ENCODE measurements at regions of chr4 and their contacts with region 1.

Region 1: DNA sequence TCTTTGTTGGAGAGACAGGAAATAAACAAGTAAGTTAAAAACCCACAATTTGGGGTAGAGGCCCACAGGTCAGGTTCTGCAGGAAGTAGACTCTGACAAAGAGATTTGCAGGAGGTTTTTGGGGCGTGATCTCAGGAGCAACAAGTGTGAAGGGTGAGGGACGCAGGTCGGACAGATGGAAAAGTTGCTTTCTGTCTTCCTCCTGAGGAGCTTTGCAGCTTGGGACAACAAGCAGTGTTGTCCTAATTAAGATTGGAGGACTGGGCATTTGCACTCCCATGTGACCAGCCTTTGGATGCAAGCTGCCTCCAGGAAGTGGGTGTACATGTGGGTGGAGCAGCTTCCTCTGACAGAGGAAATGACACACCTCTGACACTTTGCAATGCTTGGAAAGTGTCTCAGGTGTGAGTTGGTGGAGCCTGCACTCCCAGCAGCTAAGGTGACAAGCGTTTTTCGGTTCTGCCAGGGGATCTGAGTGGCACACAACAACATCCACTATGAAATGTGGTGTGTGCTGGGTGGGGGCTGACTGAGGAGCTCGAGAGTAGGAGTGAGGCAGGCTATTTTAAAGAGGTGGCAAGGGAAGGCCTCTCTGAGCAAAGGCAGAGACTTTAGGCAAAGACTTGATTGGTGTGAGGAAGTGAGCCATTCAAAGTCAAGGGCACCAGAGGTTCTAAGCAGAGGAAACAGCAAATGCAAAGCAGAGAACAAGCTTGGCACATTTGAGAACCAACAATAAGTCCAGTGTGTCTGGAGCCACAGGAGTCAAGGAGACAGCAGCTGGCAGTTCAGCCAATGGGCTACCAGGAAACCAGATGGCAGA is 339.8 kb upstream of the GATB start:
- DNase-seq: peak; percentile 91 to 95 (median 94)
- H3K4me3 ChIP-seq: peak overlapping the region; percentile 33 to 70
- H3K4me3 Mint-ChIP-seq: peak overlapping the region; percentile 76 to 92 (median 90)
- H3K27ac ChIP-seq: peak overlapping the region; percentile 78
- H3K27ac Mint-ChIP-seq: peak overlapping the region; percentile 96 to 99 (median 98)
- H3K4me1 ChIP-seq: peaks cover 95% of the 10 kb centered on the region
- H3K4me1 Mint-ChIP-seq: peaks cover 66 to 97% (median 86%) of the 10 kb centered on the region in 4 donors
- H3K27me3 ChIP-seq: no peaks in the 10 kb centered on the region
- H3K27me3 Mint-ChIP-seq: no peaks in the 10 kb centered on the region

Region 2: DNA sequence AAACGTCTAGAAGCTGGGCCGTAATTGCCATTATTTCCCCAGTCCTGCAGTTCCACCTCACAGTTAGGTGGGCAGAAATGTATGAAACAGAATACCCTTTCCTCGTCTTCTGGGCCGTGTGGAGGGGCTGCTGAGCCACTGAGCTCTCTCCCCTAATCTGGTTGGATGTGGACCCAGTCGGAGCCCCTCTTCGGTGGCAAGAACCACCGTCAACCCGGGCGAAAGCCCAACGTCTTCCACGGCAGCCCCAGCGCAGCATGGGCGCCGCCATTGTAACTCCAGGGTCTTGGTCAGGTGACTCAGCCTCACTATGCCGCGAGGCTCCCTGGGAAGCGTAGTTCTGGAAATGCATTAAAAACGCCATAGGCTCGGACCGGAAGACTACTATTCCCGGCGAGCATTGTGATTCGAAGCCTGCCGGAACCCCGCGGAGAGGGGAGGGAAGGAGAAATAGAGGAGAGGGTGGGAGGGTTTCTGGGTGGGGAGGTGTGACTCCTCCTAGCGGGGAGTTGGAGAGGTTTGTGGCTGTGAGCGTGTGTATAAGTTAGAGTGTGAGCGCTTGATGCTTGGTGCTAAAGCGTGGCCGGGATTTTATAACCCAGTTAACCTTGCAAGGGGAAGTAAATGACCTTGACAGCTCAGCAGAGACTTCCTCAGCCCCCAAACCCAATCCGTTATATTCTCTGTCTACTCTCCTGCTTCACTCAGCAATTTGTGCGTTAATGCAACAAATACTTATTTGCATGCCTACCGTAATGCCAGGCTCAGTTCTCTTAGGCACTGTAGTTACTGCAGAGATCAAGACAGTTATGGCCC is 339.7 kb before region 1 on chr4 and contains the start of gene GATB:
- CTCF ChIA-PET with region 1: interaction called, 3 read pairs
- POLR2A ChIA-PET with region 1: interaction called, 7 read pairs
- intact Hi-C with region 1: loop called (anchors 5 kb)
- DNase-seq: peak; percentile 91 to 97 (median 93)
- H3K4me3 ChIP-seq: peak within 1 kb of the TSS; percentile 77 to 84
- H3K4me3 Mint-ChIP-seq: peak within 1 kb of the TSS; percentile 96 to 100 (median 98)
- H3K27ac ChIP-seq: peak within 1 kb of the TSS; percentile 60
- H3K27ac Mint-ChIP-seq: peak within 1 kb of the TSS; percentile 87 to 98 (median 97)
- H3K4me1 ChIP-seq: peaks cover 13% of the 10 kb centered on the region
- H3K4me1 Mint-ChIP-seq: peaks cover 13 to 19% (median 17%) of the 10 kb centered on the region in 4 donors
- H3K27me3 ChIP-seq: no peaks in the 10 kb centered on the region
- H3K27me3 Mint-ChIP-seq: peaks cover under 1 to 1% of the 10 kb centered on the region in 2 donors
- total RNA-seq, gene GATB: 10.8 to 12.5 TPM

Region 3: DNA sequence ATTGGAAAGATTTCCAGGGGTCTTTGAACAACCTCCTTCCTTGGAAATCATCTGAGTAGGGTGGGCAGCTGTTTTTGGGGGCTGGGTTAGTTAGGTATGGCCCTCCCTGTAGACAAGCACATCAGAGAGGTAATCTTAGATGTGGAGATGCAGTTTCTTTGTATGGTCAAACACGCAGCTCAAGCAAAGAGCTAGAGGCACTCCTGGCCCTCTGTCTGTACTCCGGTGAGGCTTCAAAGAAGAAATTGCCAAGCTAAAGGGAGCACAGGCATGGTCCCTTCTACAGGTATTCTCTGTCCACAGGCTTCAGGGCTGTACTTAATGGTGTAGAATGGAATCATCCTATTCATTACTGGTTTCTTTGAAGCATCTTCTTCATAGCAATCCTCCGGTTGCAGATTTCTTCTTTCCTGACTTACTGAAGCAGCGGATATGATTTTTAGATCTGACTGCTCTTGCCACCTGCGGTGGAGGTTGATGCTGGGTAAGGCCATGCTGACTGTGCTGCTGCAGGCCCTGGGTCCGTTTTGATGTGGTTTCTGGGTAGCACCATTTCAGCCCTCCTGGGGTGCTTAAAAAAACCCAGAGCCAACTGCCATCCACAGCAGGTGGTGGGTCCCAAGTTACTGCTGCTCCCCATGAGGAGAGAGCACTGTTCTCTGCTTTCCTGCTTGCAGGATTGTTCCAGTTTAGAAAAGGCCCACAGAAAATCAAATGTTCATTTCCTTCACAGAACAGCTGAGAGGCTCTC is 20.9 kb before region 1 on chr4:
- CTCF ChIA-PET with region 1: interaction called, 10 read pairs
- POLR2A ChIA-PET with region 1: interaction called, 97 read pairs
- intact Hi-C with region 1: loop called (anchors 1 kb)
- DNase-seq: peak; percentile 52 to 63 (median 57)
- H3K4me3 ChIP-seq: peak overlapping the region in 1 of 2 donors; percentile 17
- H3K4me3 Mint-ChIP-seq: peak overlapping the region in 7 of 8 donors; percentile 50 to 81 (median 66)
- H3K27ac ChIP-seq: peak overlapping the region; percentile 45
- H3K27ac Mint-ChIP-seq: peak overlapping the region; percentile 85 to 97 (median 90)
- H3K4me1 ChIP-seq: peaks cover 50% of the 10 kb centered on the region
- H3K4me1 Mint-ChIP-seq: peaks cover 43 to 85% (median 67%) of the 10 kb centered on the region in 4 donors
- H3K27me3 ChIP-seq: no peaks in the 10 kb centered on the region
- H3K27me3 Mint-ChIP-seq: no peaks in the 10 kb centered on the region

Region 4: GRCh38 chr4:152128356-152128755 is 27.8 kb after region 1 on chr4:
- CTCF ChIA-PET with region 1: interaction called, 3 read pairs
- POLR2A ChIA-PET with region 1: interaction called, 14 read pairs
- intact Hi-C with region 1: no loop called
- DNase-seq: no peak
- H3K4me3 ChIP-seq: no peak overlapping the region
- H3K4me3 Mint-ChIP-seq: peak overlapping the region in 1 of 8 donors; percentile 10
- H3K27ac ChIP-seq: no peak overlapping the region
- H3K27ac Mint-ChIP-seq: peak overlapping the region in 2 of 7 donors; percentile 60 to 71
- H3K4me1 ChIP-seq: peaks cover 9% of the 10 kb centered on the region
- H3K4me1 Mint-ChIP-seq: peaks cover 16 to 54% (median 39%) of the 10 kb centered on the region in 4 donors
- H3K27me3 ChIP-seq: no peaks in the 10 kb centered on the region
- H3K27me3 Mint-ChIP-seq: no peaks in the 10 kb centered on the region

Region 5: DNA sequence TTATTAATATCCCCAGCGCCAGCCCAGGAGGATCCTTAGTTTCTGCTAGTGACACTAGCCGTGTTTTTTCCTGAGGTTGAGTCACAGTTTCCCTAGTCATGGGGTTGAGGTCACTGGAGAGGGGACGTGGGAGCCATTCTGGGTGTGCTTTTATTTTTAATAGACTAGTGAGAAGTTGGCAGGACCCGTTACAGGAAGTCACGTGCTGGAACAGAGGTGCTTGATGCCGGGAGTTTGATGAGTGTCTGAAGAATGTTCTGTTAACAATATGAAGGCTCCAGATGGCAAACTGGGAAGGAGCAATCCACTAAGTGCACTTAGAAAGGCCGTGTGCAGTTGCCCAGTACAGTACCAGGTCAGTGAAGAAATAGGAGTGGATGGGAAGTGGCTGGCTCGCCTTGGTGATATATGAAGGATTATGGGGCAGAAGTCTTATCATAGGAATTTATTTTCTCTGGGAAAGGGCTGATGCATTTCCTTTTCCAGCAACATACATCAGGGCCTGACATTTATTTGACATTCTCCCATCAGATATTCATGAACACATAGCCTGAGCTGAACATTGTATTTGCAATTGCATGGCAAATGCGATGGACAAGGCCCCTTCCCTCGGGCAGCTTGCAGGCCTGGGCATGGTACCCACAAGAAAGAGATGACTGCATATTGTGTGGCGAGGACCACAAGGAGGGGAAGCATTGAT is 143.5 kb after region 1 on chr4:
- CTCF ChIA-PET with region 1: interaction called, 4 read pairs
- POLR2A ChIA-PET with region 1: interaction called, 19 read pairs
- intact Hi-C with region 1: no loop called
- DNase-seq: peak in 1 of 5 donors; percentile 6
- H3K4me3 ChIP-seq: no peak overlapping the region
- H3K4me3 Mint-ChIP-seq: peak overlapping the region in 6 of 8 donors; percentile 1 to 77 (median 24)
- H3K27ac ChIP-seq: no peak overlapping the region
- H3K27ac Mint-ChIP-seq: peak overlapping the region in 4 of 7 donors; percentile 4 to 50 (median 16)
- H3K4me1 ChIP-seq: peaks cover 40% of the 10 kb centered on the region
- H3K4me1 Mint-ChIP-seq: peaks cover 26 to 49% (median 37%) of the 10 kb centered on the region in 4 donors
- H3K27me3 ChIP-seq: no peaks in the 10 kb centered on the region
- H3K27me3 Mint-ChIP-seq: no peaks in the 10 kb centered on the region

Region 6: DNA sequence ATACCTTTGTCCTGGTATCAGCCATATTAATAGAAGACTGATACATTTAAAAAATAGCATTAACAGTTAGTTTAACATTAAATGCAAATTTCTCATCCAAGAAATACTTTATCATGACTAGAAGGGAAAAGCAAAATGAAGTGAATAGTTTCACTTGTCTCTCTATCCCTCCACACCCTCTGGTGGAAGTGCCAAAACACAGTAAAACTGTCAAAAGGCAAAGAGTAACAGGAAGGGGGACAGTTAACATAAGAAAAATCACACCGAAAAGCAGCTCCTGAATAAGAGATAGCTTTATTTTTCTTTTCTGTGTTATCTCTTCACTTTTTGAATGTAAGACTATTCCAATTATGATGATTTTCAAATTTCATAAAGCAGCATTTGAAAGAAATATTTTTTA is 248.1 kb after region 1 on chr4:
- CTCF ChIA-PET with region 1: interaction called, 7 read pairs
- POLR2A ChIA-PET with region 1: interaction called, 4 read pairs
- intact Hi-C with region 1: loop called (anchors 1 kb)
- DNase-seq: peak; percentile 17 to 37 (median 19)
- H3K4me3 ChIP-seq: no peak overlapping the region
- H3K4me3 Mint-ChIP-seq: no peak overlapping the region
- H3K27ac ChIP-seq: no peak overlapping the region
- H3K27ac Mint-ChIP-seq: no peak overlapping the region
- H3K4me1 ChIP-seq: no peaks in the 10 kb centered on the region
- H3K4me1 Mint-ChIP-seq: peaks cover 4 to 26% (median 7%) of the 10 kb centered on the region in 4 donors
- H3K27me3 ChIP-seq: no peaks in the 10 kb centered on the region
- H3K27me3 Mint-ChIP-seq: no peaks in the 10 kb centered on the region

Region 7: DNA sequence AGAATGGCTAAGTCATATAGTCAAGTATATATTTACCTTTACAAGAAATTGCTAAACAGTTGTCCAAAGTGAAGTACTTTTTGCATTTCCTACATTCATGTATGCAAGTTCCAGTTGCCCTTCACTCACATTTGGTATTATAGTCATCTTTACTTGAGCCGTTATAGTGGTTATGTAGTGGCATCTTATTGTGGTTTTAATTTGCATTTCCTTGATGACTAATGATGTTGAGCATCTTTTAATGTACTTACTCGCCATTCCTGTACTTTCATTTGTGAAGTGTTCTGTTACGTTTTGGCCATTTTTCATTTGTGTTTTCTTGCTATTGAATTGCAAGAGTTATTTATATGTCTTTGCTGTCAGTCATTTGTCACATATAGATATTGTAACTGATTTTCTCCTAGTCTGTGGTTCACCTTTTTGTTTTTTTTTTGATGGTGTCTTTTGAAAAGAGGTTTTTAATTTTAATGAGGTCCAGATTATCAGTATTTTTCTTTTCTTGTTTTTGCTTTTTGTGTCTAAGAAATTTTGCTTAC is 706.8 kb after region 1 on chr4:
- CTCF ChIA-PET with region 1: no interaction called
- POLR2A ChIA-PET with region 1: no interaction called
- intact Hi-C with region 1: no loop called
- DNase-seq: peak in 1 of 5 donors; percentile 9
- H3K4me3 ChIP-seq: no peak overlapping the region
- H3K4me3 Mint-ChIP-seq: peak overlapping the region in 7 of 8 donors; percentile 1 to 75 (median 38)
- H3K27ac ChIP-seq: no peak overlapping the region
- H3K27ac Mint-ChIP-seq: peak overlapping the region in 3 of 7 donors; percentile 5 to 20 (median 19)
- H3K4me1 ChIP-seq: peaks cover 9% of the 10 kb centered on the region
- H3K4me1 Mint-ChIP-seq: peaks cover 11 to 20% (median 15%) of the 10 kb centered on the region in 4 donors
- H3K27me3 ChIP-seq: no peaks in the 10 kb centered on the region
- H3K27me3 Mint-ChIP-seq: no peaks in the 10 kb centered on the region